GM12878 (cell line): ENCODE measurements at regions of chr11 and their contacts with region 1.

Region 1: GRCh38 chr11:129331871-129332274 is 43.8 kb upstream of the BARX2 start:
- DNase-seq: peak; percentile 11
- ATAC-seq: peak; percentile 99
- H3K4me3 ChIP-seq: no peak overlapping the region
- H3K27ac ChIP-seq: no peak overlapping the region
- H3K4me1 ChIP-seq: no peaks in the 10 kb centered on the region
- H3K27me3 ChIP-seq: no peaks in the 10 kb centered on the region
- CTCF ChIP-seq: peak; percentile 77 to 88 (median 86)
- EP300 ChIP-seq: no peak
- POLR2A ChIP-seq: no peak
- RAD21 ChIP-seq: peak; percentile 72

Region 2: DNA sequence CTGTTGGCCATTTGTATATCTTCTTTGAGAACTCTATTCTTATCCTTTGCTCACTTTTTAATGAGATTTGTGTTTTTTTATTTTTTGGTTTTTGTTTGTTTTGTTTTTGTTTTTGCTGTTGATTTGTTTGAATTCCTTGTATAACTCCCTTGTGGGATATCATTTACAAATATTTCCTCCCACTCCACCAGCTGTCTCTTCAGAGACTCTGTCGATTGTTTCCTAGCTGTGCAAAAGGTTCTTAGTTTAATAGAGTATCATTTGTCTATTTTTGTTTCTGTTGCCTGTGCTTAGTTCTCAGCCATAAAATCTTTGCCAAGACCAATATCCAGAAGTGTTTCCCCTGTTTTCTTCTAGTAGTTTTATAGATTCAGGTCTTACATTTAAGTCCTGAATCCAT is 222.2 kb before region 1 on chr11:
- CTCF ChIA-PET with region 1: interaction called, 5 read pairs
- POLR2A ChIA-PET with region 1: no interaction called
- RAD21 ChIA-PET with region 1: no interaction called
- SMC1A ChIA-PET with region 1: interaction called, 3 read pairs
- in situ Hi-C with region 1: loop called (anchors 5 kb)
- intact Hi-C with region 1: no loop called
- DNase-seq: no peak
- ATAC-seq: no peak
- H3K4me3 ChIP-seq: no peak overlapping the region
- H3K27ac ChIP-seq: no peak overlapping the region
- H3K4me1 ChIP-seq: no peaks in the 10 kb centered on the region
- H3K27me3 ChIP-seq: no peaks in the 10 kb centered on the region
- CTCF ChIP-seq: no peak
- EP300 ChIP-seq: no peak
- POLR2A ChIP-seq: no peak
- RAD21 ChIP-seq: no peak

Region 3: GRCh38 chr11:129230006-129230405 is 101.9 kb before region 1 on chr11:
- CTCF ChIA-PET with region 1: interaction called, 12 read pairs
- POLR2A ChIA-PET with region 1: no interaction called
- RAD21 ChIA-PET with region 1: interaction called, 7 read pairs
- SMC1A ChIA-PET with region 1: interaction called, 6 read pairs
- in situ Hi-C with region 1: no loop called
- intact Hi-C with region 1: loop called (anchors 2 kb)
- DNase-seq: no peak
- ATAC-seq: no peak
- H3K4me3 ChIP-seq: no peak overlapping the region
- H3K27ac ChIP-seq: no peak overlapping the region
- H3K4me1 ChIP-seq: no peaks in the 10 kb centered on the region
- H3K27me3 ChIP-seq: no peaks in the 10 kb centered on the region
- CTCF ChIP-seq: no peak; a peak in 1 of 6 replicates
- EP300 ChIP-seq: no peak
- POLR2A ChIP-seq: no peak
- RAD21 ChIP-seq: 0 out of 2 replicates have a peak, but pooled peaks have one; percentile 16

Region 4: GRCh38 chr11:129291546-129291945 is 40.3 kb before region 1 on chr11:
- CTCF ChIA-PET with region 1: no interaction called
- POLR2A ChIA-PET with region 1: no interaction called
- RAD21 ChIA-PET with region 1: no interaction called
- SMC1A ChIA-PET with region 1: no interaction called
- in situ Hi-C with region 1: no loop called
- intact Hi-C with region 1: no loop called
- DNase-seq: no peak
- ATAC-seq: no peak
- H3K4me3 ChIP-seq: no peak overlapping the region
- H3K27ac ChIP-seq: no peak overlapping the region
- H3K4me1 ChIP-seq: no peaks in the 10 kb centered on the region
- H3K27me3 ChIP-seq: no peaks in the 10 kb centered on the region
- CTCF ChIP-seq: no peak
- EP300 ChIP-seq: no peak
- POLR2A ChIP-seq: no peak
- RAD21 ChIP-seq: no peak

Region 5: DNA sequence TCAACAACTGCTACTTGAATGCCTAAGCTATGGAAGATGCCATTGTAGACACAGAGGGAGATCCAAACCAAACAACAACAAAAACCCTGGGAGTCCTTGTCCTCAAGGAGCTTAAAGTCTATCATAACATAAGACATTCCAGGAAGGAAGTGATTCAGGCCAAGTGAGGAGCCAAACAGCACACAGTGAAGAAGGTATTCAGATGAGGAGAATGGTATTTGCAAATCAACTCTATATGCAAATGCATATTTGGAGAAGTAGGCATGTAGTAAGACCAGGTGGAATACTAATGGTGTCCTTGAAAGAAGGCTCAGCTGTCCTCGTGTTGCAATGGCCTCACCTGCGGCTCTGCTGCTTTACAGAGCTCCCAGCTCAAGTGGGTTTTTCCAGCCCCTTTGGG is 70.9 kb after region 1 on chr11:
- CTCF ChIA-PET with region 1: no interaction called
- POLR2A ChIA-PET with region 1: no interaction called
- RAD21 ChIA-PET with region 1: no interaction called
- SMC1A ChIA-PET with region 1: no interaction called
- in situ Hi-C with region 1: no loop called
- intact Hi-C with region 1: no loop called
- DNase-seq: no peak
- ATAC-seq: no peak
- H3K4me3 ChIP-seq: no peak overlapping the region
- H3K27ac ChIP-seq: no peak overlapping the region
- H3K4me1 ChIP-seq: no peaks in the 10 kb centered on the region
- H3K27me3 ChIP-seq: peaks cover 2% of the 10 kb centered on the region in 2 experiments; a peak in 2 of 4 replicates
- CTCF ChIP-seq: no peak
- EP300 ChIP-seq: no peak
- POLR2A ChIP-seq: no peak
- RAD21 ChIP-seq: no peak

Region 6: DNA sequence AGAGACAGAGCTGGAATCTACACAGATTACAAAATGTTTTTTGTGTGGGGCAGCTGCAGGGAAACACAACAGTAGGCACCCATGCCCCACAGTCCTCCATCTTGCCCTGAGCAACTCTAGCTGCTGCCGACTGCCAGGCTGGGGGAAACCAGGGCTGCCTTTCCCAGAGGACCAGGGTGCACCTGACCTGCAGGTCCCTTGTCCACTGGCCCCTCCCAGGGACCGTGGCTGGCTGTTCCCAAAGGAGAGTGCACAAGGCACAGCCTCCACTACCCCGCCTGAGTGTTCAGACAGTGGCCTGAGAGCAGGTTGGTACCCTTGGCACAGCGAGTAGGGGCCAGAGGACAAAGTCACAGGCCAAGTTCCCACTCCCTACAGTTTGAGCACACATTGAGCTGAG is 225.5 kb after region 1 on chr11:
- CTCF ChIA-PET with region 1: no interaction called
- POLR2A ChIA-PET with region 1: no interaction called
- RAD21 ChIA-PET with region 1: no interaction called
- SMC1A ChIA-PET with region 1: no interaction called
- in situ Hi-C with region 1: no loop called
- intact Hi-C with region 1: no loop called
- DNase-seq: no peak
- ATAC-seq: no peak
- H3K4me3 ChIP-seq: no peak overlapping the region
- H3K27ac ChIP-seq: no peak overlapping the region
- H3K4me1 ChIP-seq: no peaks in the 10 kb centered on the region
- H3K27me3 ChIP-seq: no peaks in the 10 kb centered on the region
- CTCF ChIP-seq: no peak
- EP300 ChIP-seq: no peak
- POLR2A ChIP-seq: no peak
- RAD21 ChIP-seq: no peak